Naive thymus-derived CD4-positive, alpha-beta T cell (primary cell): ENCODE measurements at regions of chr22 and their contacts with region 1.

Region 1: GRCh38 chr22:43346521-43346929 is 3.4 kb upstream of the SCUBE1 start:
- DNase-seq: peak; percentile 27 to 69 (median 45)
- ATAC-seq: peak; percentile 58
- H3K4me3 ChIP-seq: no peak overlapping the region
- H3K4me3 Mint-ChIP-seq: no peak overlapping the region
- H3K27ac ChIP-seq: no peak overlapping the region
- H3K27ac Mint-ChIP-seq: no peak overlapping the region
- H3K4me1 ChIP-seq: no peaks in the 10 kb centered on the region
- H3K4me1 Mint-ChIP-seq: peaks cover 4 to 24% (median 10%) of the 10 kb centered on the region in 7 donors
- H3K27me3 ChIP-seq: peaks cover 0 to 4% of the 10 kb centered on the region in 2 donors
- H3K27me3 Mint-ChIP-seq: peaks cover 33 to 61% (median 55%) of the 10 kb centered on the region in 5 donors

Region 2: DNA sequence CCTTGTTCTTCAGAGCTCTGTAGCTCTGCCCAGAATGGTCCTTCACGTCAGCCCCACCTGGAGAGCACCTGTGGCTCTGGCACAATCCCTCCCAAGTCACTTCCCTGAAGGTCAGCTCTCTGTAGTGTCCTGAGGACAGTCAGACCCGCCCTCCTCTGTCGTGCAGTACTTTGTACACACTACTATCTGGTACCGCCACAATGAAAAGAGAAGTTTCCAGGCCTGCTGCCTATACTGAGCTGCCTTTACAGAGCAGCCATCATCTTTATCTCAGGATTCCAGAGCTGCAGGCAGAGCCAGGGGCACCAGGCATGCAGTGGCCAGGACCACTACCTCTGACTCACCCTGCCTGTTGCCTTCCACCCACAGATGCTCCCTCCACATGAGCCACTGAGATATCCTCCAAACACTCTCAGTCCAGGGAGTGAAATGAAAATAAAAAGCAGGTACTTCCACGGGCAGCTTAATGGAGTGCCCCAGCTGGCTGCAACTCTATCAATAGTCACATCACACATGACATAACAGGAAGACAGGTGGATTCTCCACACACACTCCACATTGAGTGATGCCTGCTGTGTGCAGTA is 338.9 kb before region 1 on chr22:
- CTCF ChIA-PET with region 1: no interaction called
- POLR2A ChIA-PET with region 1: no interaction called
- intact Hi-C with region 1: no loop called
- DNase-seq: no peak
- ATAC-seq: no peak
- H3K4me3 ChIP-seq: no peak overlapping the region
- H3K4me3 Mint-ChIP-seq: peak overlapping the region in 1 of 10 donors; percentile 16
- H3K27ac ChIP-seq: peak overlapping the region; percentile 21
- H3K27ac Mint-ChIP-seq: peak overlapping the region in 6 of 9 donors; percentile 10 to 89 (median 52)
- H3K4me1 ChIP-seq: no peaks in the 10 kb centered on the region
- H3K4me1 Mint-ChIP-seq: peaks cover 34 to 85% (median 79%) of the 10 kb centered on the region in 7 donors
- H3K27me3 ChIP-seq: no peaks in the 10 kb centered on the region
- H3K27me3 Mint-ChIP-seq: no peaks in the 10 kb centered on the region

Region 3: DNA sequence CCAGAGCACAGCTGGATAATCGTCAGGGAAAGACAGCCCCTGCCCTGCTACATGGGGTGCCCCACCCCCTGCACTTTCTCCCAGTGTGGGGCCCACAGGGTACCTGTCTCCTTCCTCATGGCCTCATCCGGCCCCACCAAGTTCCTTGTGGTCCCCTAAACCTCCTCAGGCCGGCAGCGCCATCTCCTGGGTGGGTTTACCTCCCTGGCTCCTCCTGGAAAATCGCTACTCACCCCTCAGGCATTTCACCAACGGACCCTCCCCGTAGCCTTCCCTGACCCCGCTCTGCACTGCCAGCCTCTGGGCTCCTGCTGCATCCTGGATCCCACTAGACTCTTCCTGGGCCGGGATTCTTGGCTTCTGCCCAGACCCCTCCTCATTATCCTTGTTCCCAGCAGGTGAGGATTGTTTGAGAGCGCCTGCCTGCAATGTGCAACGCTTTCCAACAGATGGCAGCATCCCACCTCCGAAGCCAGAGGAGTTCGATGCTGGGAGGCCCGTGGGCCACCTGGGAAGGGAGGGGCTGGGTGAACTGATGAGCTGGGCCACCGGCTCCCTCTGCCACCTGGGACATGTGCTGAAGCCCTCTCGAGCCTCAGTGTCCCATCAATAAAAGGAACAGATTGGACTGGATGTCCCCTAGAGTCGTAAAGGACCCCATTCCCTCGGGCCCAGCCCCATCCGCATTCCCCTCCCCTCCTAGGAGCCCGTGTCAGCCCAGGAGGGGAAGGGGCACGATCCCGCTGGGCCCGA is 115.4 kb before region 1 on chr22:
- CTCF ChIA-PET with region 1: interaction called, 29 read pairs
- POLR2A ChIA-PET with region 1: interaction called, 6 read pairs
- intact Hi-C with region 1: loop called in 1 of 2 experiments (anchors 1 kb)
- DNase-seq: peak; percentile 14 to 70 (median 53)
- ATAC-seq: peak; percentile 76
- H3K4me3 ChIP-seq: no peak overlapping the region
- H3K4me3 Mint-ChIP-seq: no peak overlapping the region
- H3K27ac ChIP-seq: no peak overlapping the region
- H3K27ac Mint-ChIP-seq: no peak overlapping the region
- H3K4me1 ChIP-seq: peaks cover 0 to 6% of the 10 kb centered on the region in 2 donors
- H3K4me1 Mint-ChIP-seq: peaks cover 0 to 11% (median 5%) of the 10 kb centered on the region in 7 donors
- H3K27me3 ChIP-seq: no peaks in the 10 kb centered on the region
- H3K27me3 Mint-ChIP-seq: peaks cover 0 to 5% (median 0%) of the 10 kb centered on the region in 5 donors

Region 4: GRCh38 chr22:43273902-43274484 is 72.5 kb before region 1 on chr22:
- CTCF ChIA-PET with region 1: interaction called, 22 read pairs
- POLR2A ChIA-PET with region 1: no interaction called
- intact Hi-C with region 1: loop called in 1 of 2 experiments (anchors 1 kb)
- DNase-seq: peak in 7 of 9 donors; percentile 10 to 43 (median 21)
- ATAC-seq: peak; percentile 70
- H3K4me3 ChIP-seq: no peak overlapping the region
- H3K4me3 Mint-ChIP-seq: no peak overlapping the region
- H3K27ac ChIP-seq: no peak overlapping the region
- H3K27ac Mint-ChIP-seq: peak overlapping the region in 3 of 9 donors; percentile 14 to 76 (median 21)
- H3K4me1 ChIP-seq: no peaks in the 10 kb centered on the region
- H3K4me1 Mint-ChIP-seq: peaks cover 0 to 11% (median 0%) of the 10 kb centered on the region in 7 donors
- H3K27me3 ChIP-seq: no peaks in the 10 kb centered on the region
- H3K27me3 Mint-ChIP-seq: peaks cover 0 to 8% (median 0%) of the 10 kb centered on the region in 5 donors